A549 (cell line): ENCODE measurements at regions of chr11 and their contacts with region 1.

Region 1: GRCh38 chr11:61816736-61817455 is at the start of gene FADS1:
- DNase-seq: peak; percentile 96 to 97
- ATAC-seq: peak; percentile 67 to 75
- H3K4me3 ChIP-seq: peak within 1 kb of the TSS; percentile 83
- H3K27ac ChIP-seq: peak within 1 kb of the TSS; percentile 98 to 99
- H3K4me1 ChIP-seq: peaks cover 44% of the 10 kb centered on the region
- CTCF ChIP-seq: peak; percentile 76
- EP300 ChIP-seq: 0 out of 5 replicates have a peak, but pooled peaks of 1 of the 2 experiments have one; percentile 10
- POLR2A ChIP-seq: peak; percentile 53
- RAD21 ChIP-seq: peak; percentile 42 to 60; a peak in 4 of 5 replicates
- polyA plus RNA-seq, gene FADS1: 163 and 175 TPM in 2 replicates

Region 2: DNA sequence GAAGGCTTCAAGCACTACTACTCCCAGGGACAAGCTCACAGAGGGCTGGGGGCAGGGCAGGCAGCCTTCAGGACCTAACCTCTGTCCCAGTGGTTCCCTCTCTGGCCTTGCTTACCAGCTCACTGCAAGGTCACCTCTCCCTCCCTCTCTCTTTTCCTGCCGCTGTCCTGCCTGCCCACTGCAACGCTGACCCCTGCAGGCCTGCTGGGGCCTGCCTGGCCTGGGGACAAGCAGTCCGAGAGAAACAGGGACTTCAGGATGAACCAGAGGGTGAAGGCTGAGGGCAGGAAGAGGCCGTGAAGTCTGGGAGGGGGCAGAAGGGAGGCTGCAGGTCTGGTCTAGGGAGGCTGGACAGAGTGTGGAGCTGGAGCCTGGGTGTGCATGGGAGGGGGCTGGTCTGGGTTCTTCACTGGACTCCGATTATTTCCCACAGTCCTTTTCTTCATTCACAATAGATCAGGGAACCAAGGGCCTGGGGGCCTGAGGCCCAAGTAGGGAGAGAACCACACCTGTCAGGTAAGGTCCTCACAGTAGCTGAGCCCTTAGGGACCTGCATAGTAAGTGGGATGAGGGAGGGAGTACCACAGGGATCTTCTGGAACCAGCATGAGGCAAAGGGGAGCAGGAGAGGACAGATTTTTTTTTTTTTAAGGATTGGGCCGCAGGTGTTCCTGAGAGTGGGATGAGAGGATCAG is 239.0 kb before region 1 on chr11:
- CTCF ChIA-PET with region 1: no interaction called
- POLR2A ChIA-PET with region 1: no interaction called
- DNase-seq: peak in 1 of 2 experiments; percentile 33
- ATAC-seq: peak in 1 of 2 experiments; percentile 5; a peak in 1 of 6 replicates
- H3K4me3 ChIP-seq: no peak overlapping the region
- H3K27ac ChIP-seq: no peak overlapping the region
- H3K4me1 ChIP-seq: peaks cover 13% of the 10 kb centered on the region; the same call in 2 of the 3 replicates
- CTCF ChIP-seq: peak; percentile 20; the same call in 1 of the 3 replicates
- EP300 ChIP-seq: no peak
- POLR2A ChIP-seq: no peak
- RAD21 ChIP-seq: peak in 1 of 2 experiments; percentile 37; a peak in 1 of 5 replicates

Region 3: DNA sequence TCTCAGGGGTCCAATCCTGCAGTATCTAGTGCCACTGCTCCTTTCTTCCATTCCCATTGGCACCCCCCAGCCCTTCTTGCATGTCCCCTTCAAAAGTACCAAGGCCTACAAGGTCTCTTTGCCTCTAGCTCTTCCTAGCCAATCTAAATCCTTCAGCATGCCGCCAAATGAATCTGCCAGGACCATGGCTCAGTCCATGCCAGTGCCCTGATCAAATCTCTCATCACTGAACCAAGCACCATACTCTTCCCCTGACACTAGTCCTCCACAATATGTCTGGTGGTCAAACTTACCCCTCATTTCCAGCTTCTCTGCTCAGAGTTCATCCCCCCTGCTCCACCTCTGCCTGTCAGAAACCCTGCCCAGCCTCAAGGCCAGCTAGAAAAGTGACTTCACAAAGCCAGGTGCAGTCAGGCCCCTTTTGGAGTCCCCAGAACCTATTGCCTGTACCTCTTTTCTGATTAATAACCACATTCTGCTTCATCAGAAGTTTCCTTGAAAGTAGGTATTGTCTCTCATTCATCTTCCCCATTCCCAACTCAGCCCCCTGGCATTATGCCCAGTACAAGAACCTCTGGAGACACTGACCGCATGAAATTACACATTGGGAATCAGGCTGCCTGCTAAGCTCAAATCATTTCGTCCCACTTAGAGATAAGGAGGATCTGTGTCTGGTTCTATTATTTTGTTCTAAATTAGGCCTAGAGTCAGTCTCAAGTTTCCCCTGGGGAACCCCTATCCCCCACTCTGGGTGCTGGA is 12.8 kb before region 1 on chr11:
- CTCF ChIA-PET with region 1: interaction called, 145 read pairs
- POLR2A ChIA-PET with region 1: interaction called, 43 read pairs
- DNase-seq: no peak
- ATAC-seq: no peak
- H3K4me3 ChIP-seq: no peak overlapping the region
- H3K27ac ChIP-seq: no peak overlapping the region
- H3K4me1 ChIP-seq: peaks cover 32% of the 10 kb centered on the region
- CTCF ChIP-seq: no peak
- EP300 ChIP-seq: no peak
- POLR2A ChIP-seq: no peak
- RAD21 ChIP-seq: no peak